Left cardiac atrium (tissue), 4 donors: ENCODE measurements at regions of chr3 and their contacts with region 1.

Region 1: DNA sequence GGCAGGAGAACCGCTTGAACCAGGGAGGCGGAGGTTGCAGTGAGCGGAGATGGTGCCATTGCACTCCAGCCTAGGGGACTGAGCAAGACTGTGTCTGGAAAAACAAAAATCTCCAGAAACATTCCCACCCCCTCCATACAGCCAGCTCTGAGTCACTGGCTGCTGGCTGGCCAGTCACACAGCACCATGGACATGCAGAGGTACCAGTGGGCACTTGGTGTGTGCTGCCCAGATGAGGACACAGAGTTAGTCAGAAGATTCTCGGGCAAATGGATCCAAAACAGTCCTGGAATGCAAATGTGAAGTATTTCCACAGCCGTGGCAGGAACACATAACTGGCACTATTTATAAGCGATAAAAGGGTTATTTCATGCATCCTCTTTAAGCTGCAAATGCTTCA is 44.6 kb downstream of the BDH1 start:
- DNase-seq: no peak
- ATAC-seq: no peak

Region 2: GRCh38 chr3:197256836-197257444 is 254.2 kb before region 1 on chr3:
- intact Hi-C with region 1: loop called (anchors 2 to 10 kb)
- DNase-seq: no peak
- ATAC-seq: no peak